ENCODE measurements at regions of chr9 and their contacts with region 1.

Region 1: DNA sequence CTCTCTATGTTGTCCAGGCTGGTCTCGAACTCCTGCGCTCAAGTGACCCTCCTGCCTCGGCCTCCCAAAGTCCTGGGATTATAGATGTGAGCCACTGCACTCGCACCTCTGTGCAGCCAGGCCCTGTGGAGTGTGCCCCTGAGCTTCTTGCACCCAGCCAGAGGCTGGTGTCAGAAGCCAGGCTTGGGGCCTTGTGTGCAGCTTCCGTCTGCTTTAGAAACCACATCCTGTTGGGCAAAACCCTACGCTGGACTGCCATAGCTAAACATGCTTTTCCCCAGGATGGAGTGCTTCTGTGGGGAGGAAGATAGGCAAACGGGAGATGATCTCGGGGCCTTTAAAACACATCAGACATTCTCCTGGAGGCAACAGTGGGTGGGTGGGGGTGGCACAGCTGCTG is 40.1 kb downstream of the PRRT1B start:
- DNase-seq: peak; percentile 24 to 78 (median 45)
- H3K4me3 ChIP-seq: peak overlapping the region; percentile 32
- H3K4me3 Mint-ChIP-seq: peak overlapping the region; percentile 59 to 91 (median 78)
- H3K27ac ChIP-seq: peak overlapping the region; percentile 38
- H3K27ac Mint-ChIP-seq: peak overlapping the region; percentile 87 to 97 (median 94)
- H3K4me1 ChIP-seq: peaks cover 35% of the 10 kb centered on the region
- H3K4me1 Mint-ChIP-seq: peaks cover 32 to 57% (median 38%) of the 10 kb centered on the region in 3 donors
- H3K27me3 ChIP-seq: no peaks in the 10 kb centered on the region
- H3K27me3 Mint-ChIP-seq: peaks cover 0 to 1% of the 10 kb centered on the region in 2 donors

Region 2: DNA sequence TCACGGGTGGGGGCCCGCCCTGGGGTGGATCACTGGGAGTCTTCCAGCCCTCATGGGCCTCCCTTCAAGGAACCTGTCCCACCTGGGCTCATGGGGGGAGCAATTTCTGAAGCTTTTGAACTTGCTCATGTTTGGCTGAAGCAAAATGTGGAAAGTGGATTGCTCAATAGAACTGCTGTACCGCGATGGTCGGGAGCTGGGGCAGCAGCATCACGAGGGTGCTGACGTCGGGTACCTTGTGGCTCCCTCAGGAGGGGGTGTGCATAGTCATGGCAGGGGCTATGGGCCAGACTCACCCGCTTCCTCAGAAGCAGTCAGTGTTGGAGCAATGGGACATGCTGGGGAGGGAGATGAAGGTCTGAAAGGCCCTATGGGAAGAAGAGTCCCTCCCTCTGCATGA is 17.8 kb after region 1 on chr9:
- CTCF ChIA-PET with region 1: interaction called, 4 read pairs
- POLR2A ChIA-PET with region 1: interaction called, 10 read pairs
- DNase-seq: no peak
- H3K4me3 ChIP-seq: no peak overlapping the region
- H3K4me3 Mint-ChIP-seq: no peak overlapping the region
- H3K27ac ChIP-seq: no peak overlapping the region
- H3K27ac Mint-ChIP-seq: peak overlapping the region in 4 of 8 donors; percentile 7 to 85 (median 28)
- H3K4me1 ChIP-seq: no peaks in the 10 kb centered on the region
- H3K4me1 Mint-ChIP-seq: peaks cover 6 to 14% (median 9%) of the 10 kb centered on the region in 3 donors
- H3K27me3 ChIP-seq: no peaks in the 10 kb centered on the region
- H3K27me3 Mint-ChIP-seq: no peaks in the 10 kb centered on the region

Region 3: GRCh38 chr9:131700765-131701435 is 115.5 kb after region 1 on chr9:
- CTCF ChIA-PET with region 1: no interaction called
- POLR2A ChIA-PET with region 1: no interaction called
- DNase-seq: no peak
- H3K4me3 ChIP-seq: no peak overlapping the region
- H3K4me3 Mint-ChIP-seq: no peak overlapping the region
- H3K27ac ChIP-seq: no peak overlapping the region
- H3K27ac Mint-ChIP-seq: peak overlapping the region in 3 of 8 donors; percentile 9 to 42 (median 30)
- H3K4me1 ChIP-seq: peaks cover 56% of the 10 kb centered on the region
- H3K4me1 Mint-ChIP-seq: peaks cover 82 to 99% (median 98%) of the 10 kb centered on the region in 3 donors
- H3K27me3 ChIP-seq: no peaks in the 10 kb centered on the region
- H3K27me3 Mint-ChIP-seq: no peaks in the 10 kb centered on the region

Region 4: GRCh38 chr9:131739980-131740648 is 154.7 kb after region 1 on chr9 and contains the start of gene RAPGEF1:
- CTCF ChIA-PET with region 1: interaction called, 119 read pairs
- POLR2A ChIA-PET with region 1: interaction called, 3 read pairs
- DNase-seq: peak; percentile 73 to 86 (median 78)
- H3K4me3 ChIP-seq: peak within 1 kb of the TSS; percentile 51
- H3K4me3 Mint-ChIP-seq: peak within 1 kb of the TSS; percentile 90 to 98 (median 94)
- H3K27ac ChIP-seq: peak within 1 kb of the TSS; percentile 33
- H3K27ac Mint-ChIP-seq: peak within 1 kb of the TSS; percentile 81 to 98 (median 94)
- H3K4me1 ChIP-seq: peaks cover 62% of the 10 kb centered on the region
- H3K4me1 Mint-ChIP-seq: peaks cover 50 to 67% (median 61%) of the 10 kb centered on the region in 3 donors
- H3K27me3 ChIP-seq: no peaks in the 10 kb centered on the region
- H3K27me3 Mint-ChIP-seq: peaks cover 0 to 2% of the 10 kb centered on the region in 2 donors
- total RNA-seq, gene RAPGEF1: 145 to 148 TPM